ENCODE measurements at regions of chr17 and their contacts with region 1.

Region 1: DNA sequence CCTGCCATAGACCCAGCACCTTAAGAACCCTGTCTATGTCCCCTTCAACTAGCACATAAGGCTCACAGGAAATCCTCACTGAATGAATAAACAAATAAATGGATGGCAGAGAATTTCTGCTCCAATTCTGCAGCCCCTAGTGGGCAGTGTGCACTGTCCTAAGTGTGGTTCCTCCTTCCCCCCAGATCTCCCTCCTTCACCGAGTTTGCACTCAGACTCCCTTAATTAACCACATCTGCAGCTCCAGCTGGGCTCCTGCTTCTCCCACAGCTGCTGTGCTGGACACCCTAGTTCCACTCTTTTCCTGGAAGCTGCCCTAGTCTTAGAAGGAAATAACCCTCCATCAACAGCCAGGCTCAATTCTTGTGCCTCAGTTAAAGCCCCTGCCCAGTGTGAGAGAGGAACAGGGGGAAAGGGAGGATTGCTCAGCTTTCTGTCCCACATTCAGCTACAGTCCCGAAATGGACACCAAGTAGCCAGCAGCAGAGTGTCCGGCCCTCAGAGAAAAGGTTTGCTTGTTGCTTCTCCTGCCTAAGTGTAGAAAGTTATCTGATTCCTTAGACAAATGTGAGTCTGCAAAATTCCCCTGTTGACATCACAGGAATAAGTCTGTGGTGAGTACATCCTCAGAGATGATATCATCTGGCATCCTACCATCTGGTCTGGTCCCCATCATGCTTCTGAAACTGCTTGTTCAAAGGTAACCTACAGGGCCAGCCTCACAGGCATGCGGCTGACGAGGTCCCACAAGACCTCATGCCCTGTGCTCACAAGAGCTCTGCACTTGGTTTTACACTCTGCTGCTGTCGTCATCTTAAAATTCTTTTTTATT is 12.3 kb downstream of the LRRC3C start:
- DNase-seq: peak; percentile 50 to 83 (median 77)
- H3K4me3 ChIP-seq: no peak overlapping the region
- H3K27ac ChIP-seq: no peak overlapping the region
- H3K4me1 ChIP-seq: peaks cover 0 to 9% (median 6%) of the 10 kb centered on the region in 4 experiments
- H3K27me3 ChIP-seq: no peaks in the 10 kb centered on the region

Region 2: DNA sequence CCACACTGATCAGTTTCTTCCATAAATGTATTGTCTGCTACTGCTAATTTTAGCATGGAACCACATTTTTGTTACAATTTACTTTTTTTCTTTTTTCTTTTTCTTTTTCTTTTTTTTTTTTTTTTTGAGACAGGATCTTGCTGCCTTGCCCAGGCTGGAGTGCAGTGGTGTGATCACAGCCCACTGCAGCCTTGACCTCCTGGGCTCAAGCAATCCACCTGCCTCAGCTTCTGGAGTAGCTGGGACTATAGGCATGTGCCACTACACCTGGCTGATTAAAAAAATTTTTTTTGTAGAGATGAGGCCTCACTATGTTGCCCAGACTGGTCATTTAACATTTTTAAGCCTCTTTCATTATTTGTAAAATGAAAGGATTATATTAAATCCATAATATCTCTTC is 52.7 kb before region 1 on chr17:
- CTCF ChIA-PET with region 1: no interaction called
- POLR2A ChIA-PET with region 1: no interaction called
- DNase-seq: no peak
- H3K4me3 ChIP-seq: no peak overlapping the region
- H3K27ac ChIP-seq: no peak overlapping the region
- H3K4me1 ChIP-seq: peaks cover 0 to 9% (median 0%) of the 10 kb centered on the region in 4 experiments
- H3K27me3 ChIP-seq: no peaks in the 10 kb centered on the region

Region 3: GRCh38 chr17:39927101-39927928 is 12.5 kb before region 1 on chr17 and contains the starts of genes LRRC3C and ORMDL3:
- CTCF ChIA-PET with region 1: interaction called, 18 read pairs
- POLR2A ChIA-PET with region 1: interaction called, 4 read pairs
- DNase-seq: peak; percentile 91 to 92 (median 92)
- H3K4me3 ChIP-seq: peak within 1 kb of the TSS; percentile 66 to 91 (median 76)
- H3K27ac ChIP-seq: peak within 1 kb of the TSS; percentile 43 to 73
- H3K4me1 ChIP-seq: peaks cover 4 to 52% (median 33%) of the 10 kb centered on the region in 4 experiments
- H3K27me3 ChIP-seq: no peaks in the 10 kb centered on the region

Region 4: DNA sequence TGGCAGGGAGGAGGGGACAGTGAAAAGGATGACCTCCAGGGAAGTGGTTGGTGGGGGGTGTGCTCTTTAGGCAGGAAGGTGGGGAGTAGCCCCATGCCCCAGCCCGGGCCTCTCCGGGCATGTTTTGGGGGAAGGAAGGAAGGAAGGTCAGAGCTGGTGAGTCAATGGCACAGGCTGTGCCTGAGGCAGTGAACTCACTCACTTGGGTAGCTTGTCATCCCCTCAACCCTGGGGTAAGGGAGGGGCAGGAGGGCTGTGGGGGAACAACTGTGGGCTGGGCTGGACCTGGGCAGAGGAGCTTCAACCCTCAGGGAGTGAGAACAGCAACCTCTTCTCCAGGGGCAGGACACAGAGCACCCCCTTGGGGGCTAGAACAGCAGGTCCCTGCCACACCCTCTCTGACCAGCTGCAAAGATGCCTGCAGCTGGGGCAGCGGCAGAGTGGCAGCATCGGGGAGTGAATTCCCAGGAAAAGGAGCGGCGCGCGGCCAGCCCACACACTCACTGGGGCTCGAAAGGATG is 81.7 kb after region 1 on chr17:
- CTCF ChIA-PET with region 1: no interaction called
- POLR2A ChIA-PET with region 1: no interaction called
- DNase-seq: no peak
- H3K4me3 ChIP-seq: no peak overlapping the region
- H3K27ac ChIP-seq: no peak overlapping the region
- H3K4me1 ChIP-seq: peaks cover 0 to 6% (median 0%) of the 10 kb centered on the region in 4 experiments
- H3K27me3 ChIP-seq: no peaks in the 10 kb centered on the region

Region 5: GRCh38 chr17:40230670-40231069 is 290.9 kb after region 1 on chr17:
- CTCF ChIA-PET with region 1: no interaction called
- POLR2A ChIA-PET with region 1: no interaction called
- DNase-seq: no peak
- H3K4me3 ChIP-seq: no peak overlapping the region
- H3K27ac ChIP-seq: no peak overlapping the region
- H3K4me1 ChIP-seq: no peaks in the 10 kb centered on the region
- H3K27me3 ChIP-seq: no peaks in the 10 kb centered on the region

Measured in common myeloid progenitor, CD34-positive (primary cell).